HEK293 (cell line): ENCODE measurements at regions of chr4 and their contacts with region 1.

Region 1: DNA sequence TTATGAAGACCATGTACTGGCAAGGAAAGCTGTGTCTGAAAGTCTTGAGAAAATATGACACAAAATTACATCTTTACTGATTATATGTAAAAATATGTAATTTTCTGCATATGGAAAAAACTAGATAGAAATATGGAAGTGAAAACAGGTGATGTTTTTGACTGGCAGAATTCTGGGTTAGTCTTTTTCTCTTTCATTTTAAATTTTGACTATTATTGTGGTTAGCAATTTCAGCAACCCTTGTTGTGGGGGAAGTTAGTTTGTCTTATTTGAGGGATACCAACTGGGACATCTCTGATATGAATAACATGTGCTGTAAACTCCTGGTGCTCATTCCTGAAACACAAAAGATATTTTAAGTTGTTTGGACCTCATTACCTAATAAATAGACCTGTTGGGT is 49.9 kb upstream of the CPEB2 start:
- H3K4me3 ChIP-seq: no peak overlapping the region
- H3K27ac ChIP-seq: no peak overlapping the region
- H3K4me1 ChIP-seq: no peaks in the 10 kb centered on the region
- CTCF ChIP-seq: no peak

Region 2: GRCh38 chr4:14415146-14415545 is 537.2 kb before region 1 on chr4:
- CTCF ChIA-PET with region 1: interaction called, 10 read pairs
- POLR2A ChIA-PET with region 1: no interaction called
- H3K4me3 ChIP-seq: no peak overlapping the region
- H3K27ac ChIP-seq: no peak overlapping the region
- H3K4me1 ChIP-seq: no peaks in the 10 kb centered on the region
- CTCF ChIP-seq: no peak